ENCODE measurements at regions of chr1 and their contacts with region 1.

Region 1: DNA sequence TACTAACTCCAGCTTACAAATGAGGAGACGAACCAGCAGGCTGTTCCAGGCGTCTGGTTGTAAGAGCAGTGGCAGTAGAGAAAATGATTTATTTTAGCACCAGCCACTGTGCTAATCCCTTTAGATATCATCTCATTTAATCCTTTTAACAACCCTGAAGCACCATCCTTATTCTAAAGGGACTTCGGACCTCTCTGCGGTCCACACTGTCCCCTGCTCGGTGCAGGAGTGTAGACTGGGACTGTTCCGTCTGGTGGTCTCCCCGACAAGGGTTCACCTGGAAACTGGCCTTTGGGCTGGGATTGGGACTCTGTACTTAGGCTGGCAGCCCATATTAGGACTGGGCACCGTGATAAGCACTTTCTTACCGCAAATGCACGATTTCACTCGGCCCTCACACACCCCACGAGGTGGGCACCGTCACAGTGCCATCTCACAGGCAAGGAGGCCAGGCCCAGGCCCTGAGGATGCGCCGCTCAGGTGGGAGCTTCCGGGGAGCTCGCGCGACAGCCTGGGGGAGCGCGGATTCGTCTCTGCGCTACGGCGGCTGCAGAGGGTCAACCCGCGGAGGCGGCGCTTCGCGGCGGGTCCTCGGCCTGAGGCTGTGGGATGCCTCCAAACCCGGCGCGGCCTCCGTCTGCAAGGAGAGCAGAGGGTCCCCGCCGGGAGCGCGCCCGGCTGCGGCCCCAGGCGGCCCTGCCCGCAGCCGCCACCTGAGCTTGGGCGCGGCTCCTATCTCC is 45.2 kb downstream of the ATP1A1 start:
- DNase-seq: peak; percentile 93
- ATAC-seq: peak; percentile 93
- H3K4me3 Mint-ChIP-seq: peak overlapping the region; percentile 90
- H3K27ac Mint-ChIP-seq: peak overlapping the region; percentile 89
- H3K4me1 Mint-ChIP-seq: peaks cover 39% of the 10 kb centered on the region
- H3K27me3 Mint-ChIP-seq: no peaks in the 10 kb centered on the region

Region 2: GRCh38 chr1:116255486-116256285 is 162.6 kb before region 1 on chr1:
- POLR2A ChIA-PET with region 1: no interaction called
- DNase-seq: no peak
- ATAC-seq: no peak
- H3K4me3 Mint-ChIP-seq: no peak overlapping the region
- H3K27ac Mint-ChIP-seq: no peak overlapping the region
- H3K4me1 Mint-ChIP-seq: peaks cover 36% of the 10 kb centered on the region
- H3K27me3 Mint-ChIP-seq: peaks cover 1% of the 10 kb centered on the region

Region 3: GRCh38 chr1:116372587-116373444 is 45.4 kb before region 1 on chr1 and contains the start of gene ATP1A1:
- POLR2A ChIA-PET with region 1: interaction called, 50 read pairs
- DNase-seq: peak; percentile 99
- ATAC-seq: peak; percentile 62
- H3K4me3 Mint-ChIP-seq: peak within 1 kb of the TSS; percentile 96
- H3K27ac Mint-ChIP-seq: peak within 1 kb of the TSS; percentile 91
- H3K4me1 Mint-ChIP-seq: peaks cover 28% of the 10 kb centered on the region
- H3K27me3 Mint-ChIP-seq: peaks cover 14% of the 10 kb centered on the region
- total RNA-seq, gene ATP1A1: 193 to 195 TPM

Region 4: GRCh38 chr1:116433275-116434257 is 15.3 kb after region 1 on chr1:
- POLR2A ChIA-PET with region 1: interaction called, 12 read pairs
- DNase-seq: no peak
- ATAC-seq: no peak
- H3K4me3 Mint-ChIP-seq: no peak overlapping the region
- H3K27ac Mint-ChIP-seq: no peak overlapping the region
- H3K4me1 Mint-ChIP-seq: no peaks in the 10 kb centered on the region
- H3K27me3 Mint-ChIP-seq: peaks cover 30% of the 10 kb centered on the region